ENCODE measurements at regions of chr4 and their contacts with region 1.

Region 1: GRCh38 chr4:139754938-139755337 is 89.3 kb downstream of the MGST2 start:
- DNase-seq: no peak
- H3K4me3 ChIP-seq: no peak overlapping the region
- H3K27ac ChIP-seq: no peak overlapping the region
- H3K4me1 ChIP-seq: no peaks in the 10 kb centered on the region
- H3K27me3 ChIP-seq: no peaks in the 10 kb centered on the region
- CTCF ChIP-seq: no peak
- EP300 ChIP-seq: no peak
- POLR2A ChIP-seq: no peak

Region 2: GRCh38 chr4:139692309-139693012 is 62.5 kb before region 1 on chr4:
- intact Hi-C with region 1: no loop called
- DNase-seq: no peak
- H3K4me3 ChIP-seq: no peak overlapping the region
- H3K27ac ChIP-seq: no peak overlapping the region
- H3K4me1 ChIP-seq: no peaks in the 10 kb centered on the region
- H3K27me3 ChIP-seq: no peaks in the 10 kb centered on the region
- CTCF ChIP-seq: no peak
- EP300 ChIP-seq: no peak
- POLR2A ChIP-seq: no peak

Region 3: DNA sequence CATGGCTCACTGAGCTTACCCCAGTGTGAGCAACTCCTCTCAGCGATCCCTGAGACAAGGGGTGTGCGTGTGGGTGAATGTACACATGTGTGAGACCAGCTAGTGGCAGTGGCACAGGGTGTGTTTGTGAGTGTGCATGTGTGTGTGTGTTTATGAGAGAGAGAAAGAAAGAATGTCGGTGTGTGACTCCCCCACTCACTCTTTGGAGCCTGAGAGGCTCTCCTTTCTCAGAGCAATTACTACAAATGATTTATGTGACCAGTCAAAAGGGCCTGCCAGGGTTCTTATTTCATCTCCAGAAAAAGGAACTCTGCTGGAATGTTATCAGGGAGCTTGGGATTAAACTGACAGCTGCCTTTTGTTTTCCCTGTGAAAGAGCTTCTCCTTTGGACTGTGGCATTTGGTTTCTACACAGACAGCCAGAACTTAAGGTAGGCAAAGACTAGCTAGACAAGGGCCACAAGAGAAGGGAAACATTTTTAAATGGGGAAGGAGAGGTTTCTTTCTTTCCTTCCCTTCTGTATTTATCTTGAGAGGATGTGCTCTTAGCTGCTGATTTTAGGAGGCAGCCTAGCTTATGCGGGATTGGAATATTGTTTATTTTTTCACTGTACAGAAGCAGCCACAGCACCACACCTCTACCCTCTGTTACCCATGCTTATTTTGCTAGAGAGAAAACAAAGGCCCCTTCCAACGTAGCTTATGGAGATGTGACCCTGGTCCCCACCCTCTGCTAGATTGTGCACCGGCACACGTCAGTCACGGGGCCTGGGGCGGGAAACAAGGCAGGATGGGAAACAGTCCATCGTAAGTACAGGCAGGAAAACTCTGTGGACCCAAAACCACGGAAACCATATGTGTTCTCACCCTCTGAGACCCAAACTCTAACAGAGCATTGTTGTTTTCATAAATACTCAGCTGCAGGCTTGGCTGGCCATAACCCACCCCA is 54.1 kb after region 1 on chr4:
- intact Hi-C with region 1: loop called in 1 of 4 experiments (anchors 10 kb)
- DNase-seq: no peak
- H3K4me3 ChIP-seq: no peak overlapping the region
- H3K27ac ChIP-seq: no peak overlapping the region
- H3K4me1 ChIP-seq: peaks cover 13% of the 10 kb centered on the region
- H3K27me3 ChIP-seq: no peaks in the 10 kb centered on the region
- CTCF ChIP-seq: no peak
- EP300 ChIP-seq: no peak
- POLR2A ChIP-seq: no peak

Measured in ovary (tissue), 10 donors.